ENCODE measurements at regions of chrX and their contacts with region 1.

Region 1: DNA sequence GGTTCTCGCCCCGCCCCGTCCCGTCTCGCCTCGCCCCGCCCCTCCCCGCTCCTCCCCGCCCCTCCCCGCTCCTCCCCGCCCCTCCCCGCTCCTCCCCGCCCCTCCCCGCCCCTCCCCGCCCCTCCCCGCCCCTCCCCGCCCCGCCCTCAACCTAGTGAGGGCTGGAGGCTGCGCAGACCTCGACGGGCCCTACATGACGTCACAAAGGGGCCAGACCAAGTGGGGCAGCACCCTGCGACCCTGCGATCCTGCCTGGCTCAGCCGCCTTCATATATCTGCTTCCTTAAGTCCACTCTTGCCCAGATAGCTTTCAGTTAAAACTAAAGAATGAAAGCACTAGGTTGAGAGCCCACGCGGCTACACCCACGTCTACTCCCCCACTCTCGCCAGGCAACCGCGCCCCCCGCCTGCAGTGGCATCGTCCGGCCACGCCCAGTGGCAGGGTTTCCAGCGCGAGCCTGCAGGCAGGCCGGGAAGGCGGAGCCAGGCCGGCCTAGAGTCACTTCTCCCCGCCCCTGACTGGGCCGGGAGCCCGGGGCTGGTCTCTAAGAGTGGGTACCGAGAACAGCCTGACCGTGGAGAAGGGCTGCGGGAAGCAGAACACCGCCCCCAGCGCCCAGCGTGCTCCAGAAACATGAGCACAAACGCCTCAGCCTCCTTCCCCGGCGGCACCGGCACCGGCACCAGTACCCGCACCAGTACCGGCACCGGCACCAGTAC is 1.5 kb upstream of the MAOA start:
- DNase-seq: peak in 1 of 2 donors; percentile 94
- H3K4me3 ChIP-seq: peak overlapping the region; percentile 65 to 67
- H3K27ac ChIP-seq: peak overlapping the region; percentile 85
- H3K4me1 ChIP-seq: no peaks in the 10 kb centered on the region
- H3K27me3 ChIP-seq: no peaks in the 10 kb centered on the region
- CTCF ChIP-seq: no peak
- POLR2A ChIP-seq: peak in 1 of 2 donors; percentile 83

Region 2: DNA sequence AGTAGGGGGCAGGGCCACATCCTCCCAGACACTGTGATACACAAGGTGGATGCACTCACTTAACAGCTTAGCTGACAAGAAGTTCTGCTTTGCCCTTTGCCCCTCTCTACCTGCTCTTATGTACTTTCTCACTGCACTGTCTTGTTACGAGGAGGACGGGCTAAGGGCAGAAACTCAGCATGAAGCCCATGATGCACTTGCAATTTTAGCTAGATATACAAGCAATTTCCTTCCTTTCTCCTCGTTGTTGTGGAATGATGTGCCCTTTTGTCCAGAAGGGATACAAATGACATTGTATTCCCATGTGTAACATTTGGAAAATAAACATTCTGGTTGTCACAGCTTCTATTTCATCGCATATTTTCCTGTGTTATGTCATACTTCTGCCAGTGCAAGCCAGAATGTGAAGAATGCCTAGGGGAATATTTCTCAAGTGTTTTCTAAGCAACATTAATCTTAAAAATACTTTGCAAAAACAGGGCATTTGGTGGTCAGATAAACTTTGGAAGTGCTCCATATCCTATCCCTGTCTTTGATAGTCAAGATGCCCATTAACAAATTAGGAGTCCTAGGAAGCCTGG is 48.7 kb after region 1 on chrX:
- intact Hi-C with region 1: loop called (anchors 10 kb)
- DNase-seq: no peak
- H3K4me3 ChIP-seq: no peak overlapping the region
- H3K27ac ChIP-seq: no peak overlapping the region
- H3K4me1 ChIP-seq: peaks cover 17% of the 10 kb centered on the region
- H3K27me3 ChIP-seq: no peaks in the 10 kb centered on the region
- CTCF ChIP-seq: no peak
- POLR2A ChIP-seq: no peak

Measured in vagina (tissue), 2 donors.